ENCODE measurements at regions of chr1 and their contacts with region 1.

Region 1: GRCh38 chr1:115426231-115426771 is 88.3 kb upstream of the NGF start:
- DNase-seq: no peak
- ATAC-seq: no peak
- H3K4me3 ChIP-seq: no peak overlapping the region
- H3K4me3 Mint-ChIP-seq: no peak overlapping the region
- H3K27ac ChIP-seq: no peak overlapping the region
- H3K27ac Mint-ChIP-seq: no peak overlapping the region
- H3K4me1 ChIP-seq: no peaks in the 10 kb centered on the region
- H3K4me1 Mint-ChIP-seq: no peaks in the 10 kb centered on the region
- H3K27me3 ChIP-seq: no peaks in the 10 kb centered on the region
- H3K27me3 Mint-ChIP-seq: peaks cover 39% of the 10 kb centered on the region
- CTCF ChIP-seq: no peak

Region 2: DNA sequence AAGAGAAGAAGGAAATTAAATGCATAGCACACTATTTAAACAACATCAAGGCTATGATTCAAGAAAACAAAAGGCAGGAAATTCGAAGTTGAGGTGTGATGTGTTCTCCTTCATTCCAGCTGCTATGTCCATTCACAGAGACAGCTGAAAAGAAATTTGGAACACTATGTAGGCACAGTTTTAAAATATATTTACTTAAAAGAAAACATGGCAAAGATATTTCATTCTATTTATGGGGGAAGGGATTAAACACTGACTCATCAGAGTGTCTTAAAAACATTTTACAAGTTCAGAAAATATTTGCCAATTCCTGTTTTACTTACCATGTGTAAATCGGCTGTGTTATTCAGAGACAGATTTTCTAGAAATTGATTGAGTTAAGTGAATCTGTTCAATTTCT is 48.9 kb before region 1 on chr1:
- CTCF ChIA-PET with region 1: no interaction called
- POLR2A ChIA-PET with region 1: no interaction called
- intact Hi-C with region 1: loop called in 1 of 2 experiments (anchors 1 kb)
- DNase-seq: no peak
- ATAC-seq: no peak
- H3K4me3 ChIP-seq: no peak overlapping the region
- H3K4me3 Mint-ChIP-seq: no peak overlapping the region
- H3K27ac ChIP-seq: no peak overlapping the region
- H3K27ac Mint-ChIP-seq: no peak overlapping the region
- H3K4me1 ChIP-seq: no peaks in the 10 kb centered on the region
- H3K4me1 Mint-ChIP-seq: no peaks in the 10 kb centered on the region
- H3K27me3 ChIP-seq: no peaks in the 10 kb centered on the region
- H3K27me3 Mint-ChIP-seq: peaks cover 8% of the 10 kb centered on the region
- CTCF ChIP-seq: no peak

Region 3: GRCh38 chr1:115506926-115507589 is 80.8 kb after region 1 on chr1:
- CTCF ChIA-PET with region 1: no interaction called
- POLR2A ChIA-PET with region 1: no interaction called
- intact Hi-C with region 1: no loop called
- DNase-seq: no peak
- ATAC-seq: no peak
- H3K4me3 ChIP-seq: no peak overlapping the region
- H3K4me3 Mint-ChIP-seq: no peak overlapping the region
- H3K27ac ChIP-seq: no peak overlapping the region
- H3K27ac Mint-ChIP-seq: no peak overlapping the region
- H3K4me1 ChIP-seq: no peaks in the 10 kb centered on the region
- H3K4me1 Mint-ChIP-seq: no peaks in the 10 kb centered on the region
- H3K27me3 ChIP-seq: peaks cover 12 to 15% of the 10 kb centered on the region in 2 experiments
- H3K27me3 Mint-ChIP-seq: peaks cover 11% of the 10 kb centered on the region
- CTCF ChIP-seq: no peak

Measured in CD4-positive, alpha-beta T cell (primary cell).